Aorta (tissue), 5 donors: ENCODE measurements at regions of chr16 and their contacts with region 1.

Region 1: DNA sequence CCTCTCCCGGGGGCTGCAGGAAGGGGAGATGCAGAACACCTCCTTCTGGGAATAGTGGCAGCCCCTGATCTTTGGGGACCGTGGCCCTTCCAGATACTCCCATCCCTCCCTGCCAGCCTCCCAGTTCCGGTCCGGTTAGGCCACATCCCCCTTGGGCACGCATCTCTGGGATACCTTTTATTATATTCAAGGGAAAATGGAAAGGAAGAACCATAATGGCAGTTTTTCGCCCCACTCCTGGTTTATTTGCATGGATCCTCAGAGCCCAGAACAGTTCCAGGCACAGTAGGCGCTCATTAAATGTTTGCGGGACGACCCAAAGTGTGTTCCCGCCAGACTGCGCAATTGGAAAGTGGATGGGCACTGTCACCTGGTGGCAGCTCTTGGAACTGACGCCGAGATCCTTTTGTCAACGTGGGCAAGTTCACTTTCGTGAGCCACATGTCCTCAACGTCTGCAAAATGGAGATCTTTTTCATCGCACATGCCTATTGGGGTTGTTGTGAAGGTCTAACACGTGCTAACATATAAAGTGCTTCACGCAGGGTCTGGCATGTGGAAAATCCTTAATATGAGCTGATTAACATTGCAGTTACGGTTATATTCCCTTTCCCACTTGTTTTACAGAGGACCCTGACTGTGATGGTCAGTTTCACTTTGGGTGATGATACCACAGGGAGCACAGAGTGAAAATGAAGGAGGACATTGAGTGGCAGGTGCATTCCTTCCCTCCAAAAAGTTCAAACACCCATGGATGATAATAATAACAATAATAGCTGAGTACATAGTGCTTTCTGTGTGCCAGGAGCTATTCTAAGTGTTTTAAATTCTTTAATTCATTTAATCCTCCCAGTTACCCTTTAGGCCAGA is 1.7 kb upstream of the GPRC5B start:
- DNase-seq: peak; percentile 79 to 93
- ATAC-seq: peak; percentile 80
- H3K4me3 ChIP-seq: peak overlapping the region; percentile 7 to 20
- H3K27ac ChIP-seq: no peak overlapping the region
- H3K4me1 ChIP-seq: no peaks in the 10 kb centered on the region
- H3K27me3 ChIP-seq: no peaks in the 10 kb centered on the region

Region 2: GRCh38 chr16:19555162-19555937 is 331.0 kb before region 1 on chr16 and contains the start of gene VPS35L:
- intact Hi-C with region 1: loop called (anchors 2 to 5 kb)
- DNase-seq: peak; percentile 99 to 100
- ATAC-seq: peak; percentile 100
- H3K4me3 ChIP-seq: peak within 1 kb of the TSS; percentile 51
- H3K27ac ChIP-seq: peak within 1 kb of the TSS in 1 of 2 donors; percentile 39
- H3K4me1 ChIP-seq: no peaks in the 10 kb centered on the region
- H3K27me3 ChIP-seq: no peaks in the 10 kb centered on the region
- total RNA-seq, gene VPS35L: 48.8 to 66.8 TPM

Region 3: DNA sequence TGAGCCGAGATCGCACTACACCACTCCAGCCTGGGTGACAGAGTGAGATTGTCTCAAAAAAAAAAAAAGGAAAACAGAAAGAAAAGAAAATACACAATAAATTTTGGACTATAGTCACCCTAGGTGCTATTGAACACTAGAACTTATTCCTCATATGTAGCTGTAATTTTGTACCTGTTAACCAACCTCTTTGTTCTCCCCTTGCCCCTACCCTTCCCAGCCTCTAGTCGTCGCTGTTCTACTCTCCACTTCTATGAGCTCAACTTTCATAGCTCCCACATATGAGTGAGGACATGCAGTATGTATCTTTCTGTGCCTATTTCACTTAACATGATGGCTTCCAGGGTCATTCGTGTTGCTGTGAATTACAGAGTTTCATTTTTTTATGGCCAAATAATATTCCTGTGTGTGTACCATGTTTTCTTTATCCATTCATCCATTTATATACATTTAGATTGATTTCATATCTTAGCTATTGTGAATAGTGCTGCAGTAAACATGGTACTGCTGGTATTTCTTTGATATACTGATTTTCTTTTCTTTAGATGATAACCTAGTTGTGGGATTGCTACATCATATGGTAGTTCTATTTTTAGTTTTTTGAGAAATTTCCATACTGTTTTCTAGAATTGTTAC is 302.5 kb before region 1 on chr16:
- intact Hi-C with region 1: loop called in 1 of 2 experiments (anchors 5 kb)
- DNase-seq: no peak
- ATAC-seq: no peak
- H3K4me3 ChIP-seq: no peak overlapping the region
- H3K27ac ChIP-seq: no peak overlapping the region
- H3K4me1 ChIP-seq: no peaks in the 10 kb centered on the region
- H3K27me3 ChIP-seq: no peaks in the 10 kb centered on the region

Region 4: GRCh38 chr16:19601083-19601976 is 285.0 kb before region 1 on chr16:
- intact Hi-C with region 1: loop called (anchors 1 to 10 kb)
- DNase-seq: no peak
- ATAC-seq: no peak
- H3K4me3 ChIP-seq: no peak overlapping the region
- H3K27ac ChIP-seq: no peak overlapping the region
- H3K4me1 ChIP-seq: no peaks in the 10 kb centered on the region
- H3K27me3 ChIP-seq: no peaks in the 10 kb centered on the region

Region 5: DNA sequence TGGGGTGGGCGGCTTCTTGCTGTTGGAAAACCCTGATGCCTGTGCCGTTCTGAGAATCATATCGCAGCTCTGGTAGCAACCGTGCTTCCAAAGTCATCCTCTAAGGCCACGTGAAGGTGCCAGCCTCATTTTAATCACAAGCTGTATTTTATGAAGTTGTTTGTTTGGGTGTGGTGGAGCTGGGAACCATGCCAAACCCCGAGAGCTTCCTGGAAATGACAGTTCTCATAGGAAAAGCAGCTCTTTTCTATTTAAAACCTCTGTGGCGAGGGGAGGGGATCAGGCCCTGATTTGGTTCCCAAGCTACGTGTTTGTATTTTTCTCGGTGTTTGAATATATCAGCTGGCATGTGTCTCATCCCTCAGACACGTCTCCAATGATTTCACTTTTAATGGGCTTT is 190.0 kb before region 1 on chr16:
- intact Hi-C with region 1: no loop called
- DNase-seq: peak; percentile 86 to 87
- ATAC-seq: peak; percentile 51
- H3K4me3 ChIP-seq: no peak overlapping the region
- H3K27ac ChIP-seq: no peak overlapping the region
- H3K4me1 ChIP-seq: no peaks in the 10 kb centered on the region
- H3K27me3 ChIP-seq: no peaks in the 10 kb centered on the region

Region 6: DNA sequence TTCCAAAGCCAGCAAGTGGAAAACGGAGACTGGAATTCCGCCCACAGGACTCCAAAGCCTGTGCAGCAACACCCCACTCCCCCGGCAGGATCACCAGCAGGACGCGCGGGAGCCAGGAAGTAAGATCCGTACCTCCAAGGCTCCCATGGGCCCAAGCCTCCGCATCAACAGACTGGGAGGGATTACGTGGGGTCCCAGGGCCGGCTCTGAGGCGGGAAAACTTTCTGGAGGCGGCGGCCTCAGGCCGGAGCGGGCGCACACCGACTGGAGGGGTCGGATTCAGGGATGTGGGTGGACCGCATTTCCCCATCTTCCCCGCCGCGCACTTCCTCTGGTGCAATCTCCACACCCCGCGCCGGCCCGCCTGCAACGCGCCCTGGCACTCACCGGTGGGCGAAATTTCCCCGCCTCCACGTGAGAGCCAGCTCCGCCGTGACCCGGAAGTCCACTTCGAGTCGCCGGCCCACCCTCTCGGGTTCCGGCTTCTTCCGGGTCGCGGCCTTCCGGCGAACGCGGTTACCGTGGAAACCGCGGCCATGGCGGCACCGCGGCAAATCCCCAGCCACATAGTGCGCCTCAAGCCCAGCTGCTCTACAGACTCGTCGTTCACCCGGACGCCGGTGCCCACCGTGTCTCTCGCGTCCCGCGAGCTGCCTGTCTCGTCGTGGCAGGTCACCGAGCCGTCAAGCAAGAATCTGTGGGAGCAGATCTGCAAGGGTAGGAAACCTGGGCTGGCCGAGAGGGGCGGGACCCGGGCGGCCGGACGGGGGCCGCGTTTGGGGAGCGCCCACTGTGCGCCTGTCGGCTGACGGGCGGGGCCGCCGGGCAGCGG is 168.3 kb before region 1 on chr16 and contains the starts of genes IQCK and KNOP1:
- intact Hi-C with region 1: loop called (anchors 1 to 5 kb)
- DNase-seq: peak; percentile 94 to 97
- ATAC-seq: peak; percentile 96
- H3K4me3 ChIP-seq: peak within 1 kb of the TSS; percentile 71 to 91
- H3K27ac ChIP-seq: peak within 1 kb of the TSS; percentile 3 to 41
- H3K4me1 ChIP-seq: no peaks in the 10 kb centered on the region
- H3K27me3 ChIP-seq: no peaks in the 10 kb centered on the region
- total RNA-seq, gene IQCK: 5.0 to 10.0 TPM
- total RNA-seq, gene KNOP1: 7.6 to 11.6 TPM